ENCODE measurements at regions of chr16 and their contacts with region 1.

Region 1: DNA sequence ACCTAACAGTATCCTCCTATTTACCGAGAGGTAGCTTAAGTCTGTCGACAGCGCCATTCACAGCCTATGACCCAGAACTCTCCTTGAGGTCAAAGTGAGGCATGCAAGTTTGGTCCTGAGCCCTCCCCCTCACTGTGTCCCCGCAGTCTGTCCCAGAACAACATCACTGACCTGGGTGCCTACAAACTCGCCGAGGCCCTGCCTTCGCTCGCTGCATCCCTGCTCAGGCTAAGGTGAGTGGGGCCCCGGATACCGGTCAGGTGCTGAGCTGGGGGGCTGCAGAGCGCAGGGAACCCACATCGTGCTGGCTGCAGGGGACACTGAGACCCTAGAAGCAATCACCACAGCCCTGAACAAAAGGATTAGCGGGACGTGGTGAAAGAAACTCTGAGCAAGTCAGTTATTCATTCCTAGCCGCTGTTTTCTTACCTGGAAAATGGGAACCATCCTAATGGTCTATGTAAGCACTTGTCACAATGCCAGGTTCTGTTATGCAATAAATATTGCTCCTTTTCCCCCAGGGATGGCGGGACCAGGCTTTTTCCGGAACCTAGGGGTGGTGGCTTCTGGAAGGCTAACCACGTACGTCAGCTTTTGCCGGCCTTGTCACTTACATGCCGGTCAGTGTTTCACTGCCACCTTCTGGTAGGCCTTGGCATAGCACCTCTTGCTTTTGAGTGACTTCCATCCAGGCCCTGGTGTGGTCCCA is 23.8 kb downstream of the DEXI start:
- DNase-seq: peak; percentile 84 to 100
- H3K4me3 ChIP-seq: no peak overlapping the region
- H3K27ac ChIP-seq: peak overlapping the region; percentile 1 to 58
- H3K4me1 ChIP-seq: peaks cover 0 to 33% of the 10 kb centered on the region in 2 donors
- H3K27me3 ChIP-seq: no peaks in the 10 kb centered on the region
- CTCF ChIP-seq: peak; percentile 92 to 98 (median 95)

Region 2: DNA sequence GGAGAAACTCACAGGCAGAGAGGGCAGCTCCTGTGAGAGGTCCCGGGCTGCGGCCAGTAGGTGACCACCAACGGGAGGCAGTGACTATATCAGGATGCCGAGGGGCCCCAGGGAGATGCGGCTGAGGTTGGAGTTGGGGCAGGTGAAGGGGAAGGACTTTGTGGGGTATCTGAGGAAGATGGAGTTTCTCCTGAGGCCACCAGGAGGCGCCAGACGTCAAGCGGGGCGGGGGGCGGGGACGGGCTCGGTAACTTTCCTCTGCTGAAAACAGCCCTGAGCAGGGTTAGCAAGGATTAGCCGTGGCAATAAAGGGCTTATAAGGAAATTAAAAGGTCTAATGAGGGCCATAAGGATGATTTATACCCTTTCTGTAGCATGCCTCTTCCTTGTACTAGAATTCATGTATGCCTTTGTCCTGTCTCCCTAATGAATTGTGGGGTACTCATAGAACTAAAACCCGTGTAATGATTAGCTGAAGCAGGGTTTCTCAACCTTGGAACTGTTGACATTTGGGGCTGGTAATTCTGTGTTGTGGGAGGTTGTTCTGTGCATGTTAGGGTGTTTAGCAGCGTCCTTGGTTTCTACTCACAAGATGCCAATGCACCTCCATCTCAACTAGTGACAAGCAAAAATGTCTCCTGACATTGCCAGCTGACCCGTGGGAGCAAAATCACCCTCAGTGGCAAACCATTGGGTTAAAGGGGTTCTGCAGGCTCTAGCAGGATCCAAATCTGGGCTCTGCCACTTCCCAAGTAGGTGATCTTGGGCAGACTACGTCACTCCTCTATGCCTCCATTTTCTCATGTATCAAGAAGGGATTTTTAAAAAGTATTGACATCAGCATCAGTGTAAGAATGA is 661.4 kb before region 1 on chr16:
- intact Hi-C with region 1: loop called (anchors 5 kb)
- DNase-seq: no peak
- H3K4me3 ChIP-seq: no peak overlapping the region
- H3K27ac ChIP-seq: no peak overlapping the region
- H3K4me1 ChIP-seq: no peaks in the 10 kb centered on the region
- H3K27me3 ChIP-seq: no peaks in the 10 kb centered on the region
- CTCF ChIP-seq: peak; percentile 38 to 85 (median 77)

Region 3: GRCh38 chr16:10558746-10559641 is 359.5 kb before region 1 on chr16:
- intact Hi-C with region 1: loop called (anchors 5 kb)
- DNase-seq: peak; percentile 46 to 88
- H3K4me3 ChIP-seq: peak overlapping the region; percentile 27 to 37
- H3K27ac ChIP-seq: peak overlapping the region; percentile 79 to 93
- H3K4me1 ChIP-seq: peaks cover 12 to 54% of the 10 kb centered on the region in 2 donors
- H3K27me3 ChIP-seq: no peaks in the 10 kb centered on the region
- CTCF ChIP-seq: no peak

Region 4: GRCh38 chr16:10737068-10737625 is 181.3 kb before region 1 on chr16:
- intact Hi-C with region 1: loop called (anchors 1 kb)
- DNase-seq: peak in 1 of 2 donors; percentile 80
- H3K4me3 ChIP-seq: peak overlapping the region in 1 of 2 donors; percentile 33
- H3K27ac ChIP-seq: peak overlapping the region; percentile 85 to 87
- H3K4me1 ChIP-seq: peaks cover 9 to 16% of the 10 kb centered on the region in 2 donors
- H3K27me3 ChIP-seq: no peaks in the 10 kb centered on the region
- CTCF ChIP-seq: peak; percentile 85 to 92 (median 86)

Region 5: DNA sequence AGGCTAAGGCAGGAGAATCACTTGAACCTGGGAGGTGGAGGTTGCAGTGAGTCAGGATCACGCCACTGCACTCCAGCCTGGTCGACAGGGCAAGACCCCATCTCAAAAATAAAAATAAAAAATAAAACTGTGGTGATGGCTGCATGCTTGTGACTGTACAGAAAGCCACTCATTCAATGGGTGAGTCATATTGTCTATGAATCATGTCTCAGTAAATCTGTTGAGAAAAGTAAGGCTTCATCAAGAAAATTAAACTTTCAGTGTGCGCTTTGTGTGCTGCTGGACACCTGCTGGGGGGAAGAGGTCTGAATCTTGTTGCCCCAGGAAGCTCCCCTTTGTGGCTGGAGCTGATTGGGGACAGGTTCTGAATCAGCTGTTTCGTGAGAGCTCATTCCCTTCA is 163.5 kb before region 1 on chr16:
- intact Hi-C with region 1: loop called (anchors 5 kb)
- DNase-seq: no peak
- H3K4me3 ChIP-seq: no peak overlapping the region
- H3K27ac ChIP-seq: peak overlapping the region; percentile 77 to 80
- H3K4me1 ChIP-seq: peaks cover 5 to 17% of the 10 kb centered on the region in 2 donors
- H3K27me3 ChIP-seq: no peaks in the 10 kb centered on the region
- CTCF ChIP-seq: no peak

Region 6: GRCh38 chr16:10944249-10945064 is 26.0 kb after region 1 on chr16 and contains the start of gene CLEC16A:
- intact Hi-C with region 1: loop called (anchors 2 kb)
- DNase-seq: peak; percentile 93 to 99
- H3K4me3 ChIP-seq: peak within 1 kb of the TSS; percentile 98
- H3K27ac ChIP-seq: peak within 1 kb of the TSS; percentile 85 to 86
- H3K4me1 ChIP-seq: peaks cover 20 to 49% of the 10 kb centered on the region in 2 donors
- H3K27me3 ChIP-seq: no peaks in the 10 kb centered on the region
- CTCF ChIP-seq: no peak
- total RNA-seq, gene CLEC16A: 16.2 TPM

Region 7: GRCh38 chr16:10954903-10955302 is 36.5 kb after region 1 on chr16:
- intact Hi-C with region 1: no loop called
- DNase-seq: no peak
- H3K4me3 ChIP-seq: no peak overlapping the region
- H3K27ac ChIP-seq: no peak overlapping the region
- H3K4me1 ChIP-seq: peaks cover 0 to 3% of the 10 kb centered on the region in 2 donors
- H3K27me3 ChIP-seq: no peaks in the 10 kb centered on the region
- CTCF ChIP-seq: no peak

Region 8: DNA sequence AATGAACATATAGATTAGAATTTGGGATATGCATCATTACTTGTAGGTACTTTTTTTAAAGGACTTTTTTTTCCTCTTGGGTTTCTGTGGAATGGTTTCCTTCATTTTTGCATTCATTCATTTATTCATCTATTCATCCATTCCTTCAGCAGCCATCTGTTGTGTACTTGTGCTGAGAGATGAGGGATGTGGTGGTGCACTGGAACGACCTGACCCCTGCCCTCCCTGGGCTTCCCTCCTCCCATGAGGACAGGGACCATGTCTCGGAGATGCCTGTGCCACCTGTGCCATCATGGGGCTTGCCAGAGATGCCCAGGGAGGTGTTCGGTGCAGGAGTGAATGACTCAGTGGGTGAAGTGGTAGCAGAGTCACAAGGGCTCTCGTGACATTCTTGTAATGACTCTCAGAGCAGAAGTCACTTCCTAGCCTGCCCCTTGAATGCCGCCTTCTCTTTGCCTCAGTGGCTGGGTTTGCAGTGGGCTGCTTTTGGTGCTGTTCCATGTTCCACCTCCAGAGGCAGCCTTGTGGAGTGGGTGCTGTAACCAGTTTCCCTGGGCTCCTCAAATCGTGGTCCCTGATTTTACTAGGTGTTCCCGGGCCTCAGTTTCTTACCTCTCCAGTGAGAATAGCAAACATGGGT is 69.8 kb after region 1 on chr16:
- intact Hi-C with region 1: no loop called
- DNase-seq: no peak
- H3K4me3 ChIP-seq: no peak overlapping the region
- H3K27ac ChIP-seq: no peak overlapping the region
- H3K4me1 ChIP-seq: no peaks in the 10 kb centered on the region
- H3K27me3 ChIP-seq: no peaks in the 10 kb centered on the region
- CTCF ChIP-seq: peak in 1 of 3 experiments; percentile 20

Region 9: DNA sequence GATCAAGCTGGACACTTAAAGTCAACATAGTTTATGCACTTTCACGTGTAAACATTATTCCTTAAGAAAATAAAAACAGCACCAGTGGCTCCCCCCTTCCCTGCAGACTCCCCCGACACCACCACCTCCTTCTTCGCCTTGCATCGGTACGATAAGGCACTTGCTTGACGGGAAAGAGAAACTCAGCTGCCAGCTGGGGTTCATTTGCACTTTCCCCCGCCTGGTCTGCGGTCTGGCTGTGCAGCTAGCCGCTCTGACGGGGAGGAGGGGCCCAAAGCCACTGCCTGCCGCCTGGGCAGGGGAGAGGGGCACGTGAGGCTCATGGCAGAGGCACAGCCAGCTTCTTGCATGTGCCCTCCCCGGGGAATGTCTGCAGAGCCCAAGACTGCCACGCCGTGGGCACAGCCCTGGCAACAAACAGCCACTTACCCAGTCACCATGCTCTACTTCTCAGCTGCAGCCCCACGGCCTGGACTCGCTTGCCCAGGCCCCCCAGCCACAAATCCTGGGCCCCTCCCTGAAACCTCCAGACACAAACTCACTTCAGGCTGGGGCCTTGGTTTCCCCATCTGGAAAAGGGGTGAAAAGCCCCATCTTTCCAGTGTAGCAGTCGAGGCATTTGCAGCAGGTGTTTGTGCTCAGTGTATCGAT is 379.2 kb after region 1 on chr16:
- intact Hi-C with region 1: no loop called
- DNase-seq: peak; percentile 56 to 85
- H3K4me3 ChIP-seq: peak overlapping the region; percentile 42 to 45
- H3K27ac ChIP-seq: peak overlapping the region in 1 of 2 donors; percentile 26
- H3K4me1 ChIP-seq: peaks cover 0 to 11% of the 10 kb centered on the region in 2 donors
- H3K27me3 ChIP-seq: no peaks in the 10 kb centered on the region
- CTCF ChIP-seq: peak in 2 of 3 experiments; percentile 16 to 41